ENCODE measurements at regions of chr16 and their contacts with region 1.

Region 1: GRCh38 chr16:77675464-77676324 is 46.6 kb upstream of the NUDT7 start:
- DNase-seq: peak; percentile 41 to 73
- ATAC-seq: peak; percentile 91 to 95
- H3K4me3 ChIP-seq: no peak overlapping the region
- H3K27ac ChIP-seq: no peak overlapping the region
- H3K4me1 ChIP-seq: no peaks in the 10 kb centered on the region
- CTCF ChIP-seq: peak; percentile 91
- EP300 ChIP-seq: no peak
- POLR2A ChIP-seq: no peak
- RAD21 ChIP-seq: peak; percentile 95 to 98

Region 2: GRCh38 chr16:77540646-77541045 is 135.0 kb before region 1 on chr16:
- CTCF ChIA-PET with region 1: no interaction called
- POLR2A ChIA-PET with region 1: no interaction called
- DNase-seq: no peak
- ATAC-seq: no peak
- H3K4me3 ChIP-seq: no peak overlapping the region
- H3K27ac ChIP-seq: no peak overlapping the region
- H3K4me1 ChIP-seq: no peaks in the 10 kb centered on the region
- CTCF ChIP-seq: no peak
- EP300 ChIP-seq: no peak
- POLR2A ChIP-seq: no peak
- RAD21 ChIP-seq: no peak

Region 3: DNA sequence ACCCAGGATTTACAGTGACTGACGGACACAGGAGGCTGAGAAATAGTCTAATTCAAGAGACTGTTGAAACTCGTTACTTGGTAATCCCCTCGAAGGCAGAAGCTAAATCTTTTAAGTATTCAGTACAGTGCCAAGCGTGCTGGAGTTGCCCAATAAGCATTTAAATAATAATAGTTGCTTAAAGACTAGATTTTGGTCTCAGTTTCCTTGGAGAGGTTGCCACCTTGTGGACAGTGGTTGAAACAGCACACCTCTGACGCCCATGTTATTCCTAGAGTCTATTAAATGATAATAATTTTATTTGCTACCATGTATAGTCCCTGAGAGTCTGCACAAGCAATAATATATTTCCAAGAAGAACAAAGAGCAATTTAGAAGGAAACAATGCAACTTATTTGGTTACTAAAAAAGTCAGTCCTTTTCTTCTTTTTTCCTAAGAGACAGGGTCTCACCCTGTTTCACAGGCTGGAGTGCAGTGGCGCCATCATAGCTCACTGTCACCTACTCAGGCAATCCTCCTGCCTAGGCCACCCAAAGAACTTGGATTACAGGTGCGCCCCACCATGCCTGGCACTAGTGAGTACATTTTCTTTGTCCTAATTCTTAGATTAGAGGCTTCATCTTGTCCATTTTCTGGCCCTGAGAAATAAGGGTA is 91.4 kb before region 1 on chr16:
- CTCF ChIA-PET with region 1: no interaction called
- POLR2A ChIA-PET with region 1: no interaction called
- DNase-seq: peak; percentile 43 to 66
- ATAC-seq: peak; percentile 69 to 82; a peak in 4 of 6 replicates
- H3K4me3 ChIP-seq: no peak overlapping the region
- H3K27ac ChIP-seq: peak overlapping the region in 1 of 2 experiments; percentile 47; a peak in 1 of 6 replicates
- H3K4me1 ChIP-seq: peaks cover 27% of the 10 kb centered on the region; the same call in 2 of the 3 replicates
- CTCF ChIP-seq: peak; percentile 98
- EP300 ChIP-seq: no peak
- POLR2A ChIP-seq: no peak
- RAD21 ChIP-seq: peak; percentile 97 to 99

Region 4: DNA sequence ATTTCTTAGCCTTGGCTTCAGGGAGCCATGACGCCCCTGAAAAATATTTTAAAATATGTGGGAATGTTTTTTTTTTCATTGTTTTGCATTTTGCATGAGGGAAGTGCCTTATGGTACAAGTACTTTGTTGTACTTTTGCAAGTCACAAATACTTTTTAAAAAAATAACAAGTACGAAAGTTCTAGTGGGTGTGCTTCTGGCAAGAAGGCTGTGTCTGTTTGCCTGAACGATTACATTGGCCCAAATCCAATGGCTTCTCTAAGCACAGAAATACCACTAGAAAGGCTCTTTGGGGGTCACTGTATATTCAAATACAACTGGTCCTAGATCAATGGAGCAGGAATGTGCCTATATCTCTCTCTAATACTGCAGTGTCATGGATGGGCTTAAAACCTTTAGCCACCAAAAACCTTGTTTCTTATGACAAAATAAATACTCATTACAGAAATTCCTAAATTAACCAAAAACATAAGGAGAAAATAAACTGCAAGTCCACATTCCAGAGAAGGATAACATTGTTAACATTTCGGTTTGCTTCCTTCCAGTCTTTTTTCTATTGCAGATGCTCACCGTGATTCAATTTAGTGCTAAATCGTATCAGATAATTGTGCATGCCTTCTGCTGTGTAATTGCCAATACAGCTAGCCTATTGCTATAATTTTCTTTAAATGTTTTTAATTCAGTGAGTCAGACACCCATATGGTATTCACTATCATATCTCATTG is 210.0 kb after region 1 on chr16:
- CTCF ChIA-PET with region 1: no interaction called
- POLR2A ChIA-PET with region 1: no interaction called
- DNase-seq: no peak
- ATAC-seq: no peak
- H3K4me3 ChIP-seq: no peak overlapping the region
- H3K27ac ChIP-seq: no peak overlapping the region
- H3K4me1 ChIP-seq: no peaks in the 10 kb centered on the region
- CTCF ChIP-seq: no peak
- EP300 ChIP-seq: no peak
- POLR2A ChIP-seq: no peak
- RAD21 ChIP-seq: no peak

Region 5: GRCh38 chr16:77971306-77972271 is 295.9 kb after region 1 on chr16:
- CTCF ChIA-PET with region 1: interaction called, 37 read pairs
- POLR2A ChIA-PET with region 1: no interaction called
- DNase-seq: peak; percentile 31 to 64
- ATAC-seq: peak; percentile 85 to 93
- H3K4me3 ChIP-seq: no peak overlapping the region
- H3K27ac ChIP-seq: no peak overlapping the region
- H3K4me1 ChIP-seq: no peaks in the 10 kb centered on the region
- CTCF ChIP-seq: peak; percentile 73
- EP300 ChIP-seq: no peak
- POLR2A ChIP-seq: no peak
- RAD21 ChIP-seq: peak; percentile 83 to 85

Region 6: GRCh38 chr16:78669994-78670393 is 994.3 kb after region 1 on chr16:
- CTCF ChIA-PET with region 1: no interaction called
- POLR2A ChIA-PET with region 1: no interaction called
- DNase-seq: no peak
- ATAC-seq: no peak
- H3K4me3 ChIP-seq: no peak overlapping the region
- H3K27ac ChIP-seq: no peak overlapping the region
- H3K4me1 ChIP-seq: no peaks in the 10 kb centered on the region
- CTCF ChIP-seq: no peak
- EP300 ChIP-seq: no peak
- POLR2A ChIP-seq: no peak
- RAD21 ChIP-seq: no peak